ENCODE measurements at regions of chr3 and their contacts with region 1.

Region 1: DNA sequence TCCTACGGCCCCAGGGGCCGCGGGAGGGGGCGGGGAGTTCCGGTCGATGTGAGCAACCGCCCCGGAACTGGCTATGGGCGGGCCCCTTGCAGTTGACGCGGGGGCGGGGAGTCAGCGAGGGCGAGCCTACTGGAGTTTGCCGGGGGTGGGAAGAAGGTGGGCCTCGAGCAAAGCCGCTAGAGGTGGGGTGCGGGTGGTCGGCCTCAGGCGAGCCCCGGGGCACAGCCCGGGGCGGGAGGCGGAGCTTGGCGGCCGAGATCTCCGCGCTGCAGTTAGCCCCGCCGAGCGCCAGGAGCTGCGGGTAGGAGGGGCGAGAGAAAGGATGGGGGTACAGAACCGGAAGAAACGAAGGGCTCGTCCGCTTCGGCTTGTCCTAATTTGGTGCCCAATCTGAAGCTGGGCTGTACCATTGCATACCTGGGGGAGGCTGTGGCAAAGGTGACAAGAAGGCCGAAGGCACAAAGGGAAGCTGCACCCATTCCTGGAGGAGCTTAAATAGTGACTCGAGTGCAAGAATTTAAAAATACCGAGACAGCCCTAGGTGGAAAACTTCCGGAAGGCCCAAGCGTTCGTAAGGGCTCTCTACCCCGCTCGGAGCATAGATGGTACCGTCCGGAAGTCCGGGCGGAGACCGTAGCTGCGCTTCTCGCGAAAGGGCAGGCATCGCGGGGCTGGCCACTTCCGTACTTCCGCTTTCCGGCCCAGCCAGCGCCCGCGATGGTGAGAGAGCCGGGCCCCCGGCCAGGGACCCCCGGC is at the starts of genes ARPC4 and TADA3:
- DNase-seq: peak; percentile 98
- ATAC-seq: peak; percentile 95
- total RNA-seq, gene ARPC4: 70.8 TPM
- total RNA-seq, gene TADA3: 48.4 TPM

Region 2: GRCh38 chr3:9749645-9750555 is 42.7 kb before region 1 on chr3 and contains the start of gene OGG1:
- intact Hi-C with region 1: loop called (anchors 2 kb)
- DNase-seq: peak; percentile 98
- ATAC-seq: peak; percentile 98
- total RNA-seq, gene OGG1: 10.5 TPM

Region 3: GRCh38 chr3:9932843-9933560 is 140.4 kb after region 1 on chr3:
- intact Hi-C with region 1: no loop called
- DNase-seq: peak; percentile 91
- ATAC-seq: peak; percentile 84

Region 4: GRCh38 chr3:10594921-10595320 is 802.3 kb after region 1 on chr3:
- intact Hi-C with region 1: no loop called
- DNase-seq: no peak
- ATAC-seq: peak; percentile 42